GM13976 (cell line): ENCODE measurements at regions of chr14 and their contacts with region 1.

Region 1: DNA sequence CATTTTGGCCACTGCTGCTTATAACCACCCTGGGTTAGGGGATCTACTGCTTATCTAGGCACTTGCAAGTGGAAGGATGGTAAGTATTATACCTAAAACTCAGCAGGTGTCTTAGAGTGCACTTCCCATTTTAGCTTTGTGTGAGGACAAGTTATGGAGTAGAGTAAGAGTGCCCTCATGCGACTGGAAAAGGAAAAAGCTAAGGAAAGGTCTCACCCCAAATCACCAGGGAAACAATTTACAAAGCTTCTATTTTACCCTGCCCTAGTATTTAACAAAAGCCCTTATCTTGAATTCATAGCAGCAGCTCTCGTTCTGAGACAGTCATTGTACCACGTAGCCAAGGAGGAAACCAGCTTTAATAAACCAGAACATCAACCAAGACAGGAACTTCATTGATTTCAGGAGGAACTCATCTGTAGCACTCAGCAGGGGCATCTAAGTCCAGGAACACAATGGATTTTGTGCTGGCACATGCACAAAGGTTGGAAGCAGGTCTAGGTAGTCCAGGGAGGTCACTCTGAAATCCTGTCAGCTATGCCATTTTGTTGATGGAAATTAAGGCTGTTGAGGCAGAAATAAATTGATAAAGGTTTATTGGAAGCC is 2.9 kb downstream of the RDH12 start:
- DNase-seq: peak; percentile 70
- CTCF ChIP-seq: peak; percentile 64

Region 2: DNA sequence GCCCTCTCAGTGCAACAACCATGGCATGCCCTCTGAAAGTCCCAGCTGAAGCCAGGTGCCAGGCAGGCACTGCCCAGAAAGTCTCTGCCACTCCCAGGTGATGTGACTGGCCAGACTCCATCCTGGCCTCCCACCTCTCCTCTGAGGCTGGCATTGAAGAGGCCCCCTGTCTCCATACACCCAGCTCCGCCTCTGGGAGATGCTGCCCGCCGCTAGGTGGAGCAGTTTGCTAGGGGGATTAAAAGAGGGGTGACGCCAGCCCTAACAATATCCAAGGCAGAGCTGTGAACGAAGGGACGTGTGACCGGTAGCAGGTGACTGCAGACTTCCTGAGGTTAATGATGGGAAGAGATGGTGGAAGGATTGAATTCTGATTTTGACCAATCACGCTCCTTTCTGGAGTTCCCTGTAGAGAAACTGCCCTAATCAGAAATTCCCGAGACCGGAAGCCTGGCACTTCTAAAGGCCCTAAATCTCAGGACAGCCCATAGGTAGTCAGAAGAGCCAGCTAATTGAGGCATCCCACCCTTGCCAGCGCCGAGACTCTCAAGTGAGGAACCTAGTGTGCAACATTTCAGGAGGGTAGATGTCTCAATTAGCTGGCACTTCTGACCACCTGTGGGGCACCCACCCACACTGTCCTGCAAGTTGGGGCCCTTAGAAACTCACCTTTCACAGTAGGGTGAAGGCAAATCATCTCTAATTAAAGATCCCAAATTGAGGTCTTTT is 284.3 kb before region 1 on chr14:
- in situ Hi-C with region 1: loop called (anchors 25 kb)
- DNase-seq: peak; percentile 44
- CTCF ChIP-seq: peak; percentile 50

Region 3: GRCh38 chr14:67583711-67584644 is 120.6 kb before region 1 on chr14:
- in situ Hi-C with region 1: loop called (anchors 10 kb)
- DNase-seq: peak; percentile 76
- CTCF ChIP-seq: peak; percentile 64

Region 4: DNA sequence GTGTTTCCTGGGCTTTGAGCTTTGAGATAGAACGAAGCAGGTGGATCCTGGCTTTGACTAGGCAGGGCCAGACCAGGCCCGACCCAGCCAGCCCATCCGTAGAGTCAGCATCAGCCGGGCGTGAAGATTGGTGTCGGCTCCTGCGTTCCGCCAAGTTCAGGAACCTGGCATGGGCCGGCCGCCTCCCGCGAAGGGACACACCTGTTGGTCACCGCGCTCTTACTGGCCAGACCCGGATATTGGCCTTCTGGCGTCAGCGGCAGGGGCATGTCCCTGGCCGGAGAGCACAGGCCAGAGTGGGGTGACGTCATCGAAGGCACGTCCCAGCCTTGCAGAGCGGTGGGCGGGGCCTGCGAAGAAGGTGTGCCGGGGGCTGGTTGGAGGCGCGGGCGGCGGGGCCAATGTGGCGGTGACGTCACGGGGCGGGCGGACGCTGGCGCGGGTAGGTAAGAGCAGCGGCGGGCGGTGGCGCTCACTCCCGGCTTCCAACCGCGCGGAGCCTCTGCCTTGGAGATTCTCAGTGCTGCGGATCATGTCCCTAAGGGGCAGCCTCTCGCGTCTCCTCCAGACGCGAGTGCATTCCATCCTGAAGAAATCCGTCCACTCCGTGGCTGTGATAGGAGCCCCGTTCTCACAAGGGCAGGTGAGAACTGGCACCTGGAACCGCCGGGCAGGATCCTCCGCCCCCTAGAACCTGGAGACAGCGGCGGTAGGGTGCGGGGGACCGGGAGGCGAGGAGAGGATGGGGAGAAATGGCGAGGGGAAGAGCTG is 85.0 kb before region 1 on chr14 and contains the start of gene ARG2:
- in situ Hi-C with region 1: loop called (anchors 10 kb)
- DNase-seq: peak; percentile 98
- CTCF ChIP-seq: peak; percentile 25

Region 5: GRCh38 chr14:67892466-67893100 is 188.0 kb after region 1 on chr14:
- in situ Hi-C with region 1: no loop called
- DNase-seq: no peak
- CTCF ChIP-seq: no peak

Region 6: DNA sequence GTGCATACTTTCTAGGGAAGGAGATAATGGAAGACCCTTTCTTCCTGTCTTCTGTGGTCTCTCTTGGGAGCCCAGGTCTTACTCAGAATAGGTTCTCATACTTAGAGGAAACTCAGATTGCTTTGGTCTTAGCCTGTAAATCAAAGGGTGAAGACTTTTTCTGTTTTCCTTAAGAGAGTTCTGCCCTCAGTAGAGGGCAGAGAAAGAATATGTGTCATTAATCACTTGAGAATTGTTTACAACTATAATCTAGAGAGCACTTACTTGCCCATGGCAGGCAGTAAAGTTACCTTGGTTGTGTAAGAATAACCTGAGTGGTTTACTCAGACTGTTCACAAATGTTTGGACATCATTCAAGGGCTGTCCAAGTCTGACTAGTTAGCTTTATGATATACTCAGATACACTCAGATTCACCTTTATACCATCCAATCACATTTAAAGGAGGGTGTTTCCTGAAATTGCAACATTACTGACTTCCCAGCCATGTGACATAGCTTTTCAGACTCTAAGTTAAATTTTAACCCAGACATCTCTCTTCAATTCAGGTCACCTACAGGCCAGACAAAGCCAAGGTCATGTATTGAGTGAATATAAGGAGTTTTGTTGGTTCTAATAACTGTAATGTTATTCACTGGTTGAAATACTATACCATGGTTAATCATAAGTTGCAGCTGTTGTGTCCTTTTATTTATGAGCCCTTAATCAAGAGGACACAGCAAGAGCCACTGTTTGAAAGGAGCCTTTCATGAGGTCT is 487.2 kb after region 1 on chr14:
- in situ Hi-C with region 1: no loop called
- DNase-seq: no peak
- CTCF ChIP-seq: no peak